ENCODE measurements at regions of chr11 and their contacts with region 1.

Region 1: DNA sequence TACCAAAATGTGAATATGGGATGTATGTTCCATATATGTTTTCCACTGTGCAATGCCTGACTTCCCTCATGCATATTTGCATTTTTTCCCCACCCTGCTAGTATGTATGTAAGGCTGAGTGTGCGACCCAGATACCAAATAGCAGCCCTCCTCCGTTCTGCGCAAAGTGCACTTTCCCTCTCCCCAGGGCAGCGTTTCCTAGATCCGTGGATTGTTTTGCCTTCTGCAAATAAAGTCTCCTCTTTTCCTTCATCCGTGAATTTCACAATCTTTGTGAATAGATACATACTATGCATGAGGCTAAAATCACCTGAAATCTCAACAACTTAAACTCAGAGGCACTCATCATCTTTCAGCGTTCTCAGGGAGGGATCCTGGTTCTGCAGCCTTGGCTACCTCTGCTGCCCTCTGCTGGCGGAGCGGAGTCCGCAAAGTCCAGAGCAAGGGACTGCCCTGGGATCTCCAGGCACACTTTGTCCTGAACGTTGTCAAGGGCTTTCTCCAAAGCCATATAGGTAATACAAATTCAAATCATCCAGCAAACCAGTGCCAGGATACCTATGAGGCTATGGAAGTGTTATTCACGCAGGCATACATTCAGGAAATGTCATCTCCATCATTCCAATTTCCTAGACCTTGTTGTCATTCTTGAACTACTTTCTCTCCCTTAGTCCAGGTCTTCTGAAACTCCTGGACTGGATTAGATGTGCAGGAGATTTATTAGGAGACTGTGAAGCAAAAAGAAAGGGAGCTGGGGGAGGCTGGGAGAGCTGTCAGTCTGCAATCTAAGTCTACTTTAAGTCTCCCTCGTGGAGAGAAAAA is 53.1 kb downstream of the CNTF start:
- DNase-seq: peak; percentile 74 to 91 (median 84)
- H3K4me3 ChIP-seq: no peak overlapping the region
- H3K27ac ChIP-seq: no peak overlapping the region
- H3K4me1 ChIP-seq: no peaks in the 10 kb centered on the region
- H3K27me3 ChIP-seq: peaks cover 9% of the 10 kb centered on the region
- CTCF ChIP-seq: peak; percentile 76 to 94 (median 84)
- POLR2A ChIP-seq: no peak

Region 2: GRCh38 chr11:58567889-58568512 is 107.5 kb before region 1 on chr11:
- intact Hi-C with region 1: loop called in 1 of 2 experiments (anchors 10 kb)
- DNase-seq: peak; percentile 22 to 80 (median 60)
- H3K4me3 ChIP-seq: no peak overlapping the region
- H3K27ac ChIP-seq: no peak overlapping the region
- H3K4me1 ChIP-seq: peaks cover 0 to 4% of the 10 kb centered on the region in 2 donors
- H3K27me3 ChIP-seq: no peaks in the 10 kb centered on the region
- CTCF ChIP-seq: peak; percentile 65 to 72 (median 66)
- POLR2A ChIP-seq: no peak

Measured in adrenal gland (tissue), 19 donors.